Vagina (tissue), 2 donors: ENCODE measurements at regions of chr12 and their contacts with region 1.

Region 1: DNA sequence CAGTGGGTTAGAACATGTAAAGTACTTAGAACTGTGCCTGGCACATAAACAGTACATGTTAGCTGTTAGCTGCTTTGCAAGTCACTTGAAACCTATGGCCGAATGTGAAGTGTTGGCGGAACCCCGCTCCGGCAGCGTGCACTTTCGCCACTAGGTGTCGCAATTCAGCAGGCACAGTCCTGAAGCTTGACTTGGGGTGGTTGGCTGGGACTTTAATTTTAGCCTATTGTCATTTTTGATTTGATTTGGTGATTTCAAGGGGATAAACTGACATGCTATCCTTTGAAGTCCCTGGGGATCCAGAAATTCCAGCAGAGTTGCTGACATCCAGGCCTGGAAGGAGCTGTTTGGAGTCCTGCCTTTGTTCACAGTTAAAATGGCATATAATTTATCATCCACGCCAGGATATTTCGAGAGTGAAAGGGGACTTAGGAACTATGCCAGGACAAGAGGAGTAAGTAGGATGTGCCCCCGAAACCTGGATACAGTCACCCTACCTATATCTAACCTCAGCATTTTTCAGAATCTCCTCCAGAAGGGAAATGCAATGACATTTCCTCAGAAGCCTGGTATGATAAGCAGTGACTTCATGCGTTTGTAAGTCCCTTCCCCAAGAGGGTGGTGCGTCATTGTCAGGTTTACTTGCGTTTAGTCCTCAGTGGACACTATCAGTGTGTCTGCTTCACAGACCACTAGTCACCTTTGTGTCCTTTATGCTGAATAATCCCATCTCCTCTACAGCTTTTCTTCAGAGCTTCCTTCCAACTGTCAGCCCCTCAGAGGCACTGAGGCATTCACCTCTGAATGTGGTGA is 3.5 kb upstream of the TSPAN9 start:
- DNase-seq: no peak
- H3K4me3 ChIP-seq: no peak overlapping the region
- H3K27ac ChIP-seq: no peak overlapping the region
- H3K4me1 ChIP-seq: peaks cover 19% of the 10 kb centered on the region
- H3K27me3 ChIP-seq: no peaks in the 10 kb centered on the region
- CTCF ChIP-seq: peak; percentile 75 to 86 (median 85)
- POLR2A ChIP-seq: no peak

Region 2: GRCh38 chr12:2768224-2768961 is 305.3 kb before region 1 on chr12:
- intact Hi-C with region 1: no loop called
- DNase-seq: no peak
- H3K4me3 ChIP-seq: no peak overlapping the region
- H3K27ac ChIP-seq: no peak overlapping the region
- H3K4me1 ChIP-seq: no peaks in the 10 kb centered on the region
- H3K27me3 ChIP-seq: no peaks in the 10 kb centered on the region
- CTCF ChIP-seq: no peak
- POLR2A ChIP-seq: no peak

Region 3: GRCh38 chr12:3135522-3136461 is 62.1 kb after region 1 on chr12:
- intact Hi-C with region 1: loop called (anchors 10 kb)
- DNase-seq: no peak
- H3K4me3 ChIP-seq: no peak overlapping the region
- H3K27ac ChIP-seq: no peak overlapping the region
- H3K4me1 ChIP-seq: peaks cover 50% of the 10 kb centered on the region
- H3K27me3 ChIP-seq: no peaks in the 10 kb centered on the region
- CTCF ChIP-seq: peak; percentile 51 to 86 (median 75)
- POLR2A ChIP-seq: no peak

Region 4: GRCh38 chr12:3202734-3203446 is 129.2 kb after region 1 on chr12:
- intact Hi-C with region 1: loop called (anchors 10 kb)
- DNase-seq: no peak
- H3K4me3 ChIP-seq: no peak overlapping the region
- H3K27ac ChIP-seq: no peak overlapping the region
- H3K4me1 ChIP-seq: peaks cover 58% of the 10 kb centered on the region
- H3K27me3 ChIP-seq: no peaks in the 10 kb centered on the region
- CTCF ChIP-seq: peak; percentile 83 to 92 (median 84)
- POLR2A ChIP-seq: no peak

Region 5: GRCh38 chr12:3275171-3276041 is 201.8 kb after region 1 on chr12:
- intact Hi-C with region 1: loop called (anchors 2 kb)
- DNase-seq: no peak
- H3K4me3 ChIP-seq: no peak overlapping the region
- H3K27ac ChIP-seq: no peak overlapping the region
- H3K4me1 ChIP-seq: peaks cover 18% of the 10 kb centered on the region
- H3K27me3 ChIP-seq: no peaks in the 10 kb centered on the region
- CTCF ChIP-seq: peak; percentile 83 to 90 (median 87)
- POLR2A ChIP-seq: no peak